ENCODE measurements at regions of chr13 and their contacts with region 1.

Region 1: GRCh38 chr13:48303359-48304142 is at the start of gene RB1:
- H3K4me3 Mint-ChIP-seq: peak within 1 kb of the TSS; percentile 77
- H3K27ac Mint-ChIP-seq: peak within 1 kb of the TSS; percentile 95
- H3K4me1 Mint-ChIP-seq: peaks cover 33% of the 10 kb centered on the region
- H3K27me3 Mint-ChIP-seq: no peaks in the 10 kb centered on the region

Region 2: GRCh38 chr13:48263196-48263595 is 40.4 kb before region 1 on chr13:
- intact Hi-C with region 1: loop called (anchors 5 kb)
- H3K4me3 Mint-ChIP-seq: no peak overlapping the region
- H3K27ac Mint-ChIP-seq: peak overlapping the region; percentile 69
- H3K4me1 Mint-ChIP-seq: peaks cover 51% of the 10 kb centered on the region
- H3K27me3 Mint-ChIP-seq: no peaks in the 10 kb centered on the region

Measured in dendritic cell treated with granulocyte-macrophage colony-stimulating factor and Interleukin-4, amounts not matched to agents 40 ng/mL and 50 ng/mL, for 4 days (primary cell).